Aorta (tissue), 5 donors: ENCODE measurements at regions of chr11 and their contacts with region 1.

Region 1: GRCh38 chr11:85826116-85826855 is 15.3 kb upstream of the SYTL2 start:
- DNase-seq: no peak
- ATAC-seq: no peak
- H3K4me3 ChIP-seq: no peak overlapping the region
- H3K27ac ChIP-seq: no peak overlapping the region
- H3K4me1 ChIP-seq: peaks cover 0 to 2% of the 10 kb centered on the region in 2 donors
- H3K27me3 ChIP-seq: no peaks in the 10 kb centered on the region

Region 2: DNA sequence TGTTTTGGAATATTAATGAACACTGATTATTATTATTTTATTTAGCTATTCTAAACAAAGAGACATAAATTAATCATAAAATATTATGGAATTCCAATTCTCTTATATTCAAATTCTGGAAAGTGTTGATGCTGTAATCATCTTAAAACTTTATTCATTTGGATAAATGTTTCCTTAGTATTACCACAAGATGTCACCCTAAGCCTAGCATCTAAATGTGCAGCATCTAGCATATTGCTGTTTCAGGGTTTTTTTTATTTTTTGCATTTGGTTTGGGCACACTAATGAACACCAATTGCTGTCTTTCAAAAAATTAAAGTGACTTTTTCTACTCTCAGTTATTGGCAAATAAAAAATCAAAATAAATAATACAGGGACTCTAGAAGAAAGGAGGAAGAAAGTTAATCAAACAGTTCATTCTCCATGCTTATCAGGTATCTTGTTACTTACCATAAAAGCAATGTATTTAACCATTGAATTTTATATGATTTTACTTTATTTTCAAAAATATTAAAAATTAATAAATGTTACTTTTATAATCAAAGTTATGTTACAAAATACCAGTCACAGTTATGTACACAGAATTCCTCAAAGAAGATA is 230.9 kb before region 1 on chr11:
- intact Hi-C with region 1: loop called in 1 of 2 experiments (anchors 10 kb)
- DNase-seq: no peak
- ATAC-seq: no peak
- H3K4me3 ChIP-seq: no peak overlapping the region
- H3K27ac ChIP-seq: no peak overlapping the region
- H3K4me1 ChIP-seq: no peaks in the 10 kb centered on the region
- H3K27me3 ChIP-seq: no peaks in the 10 kb centered on the region

Region 3: DNA sequence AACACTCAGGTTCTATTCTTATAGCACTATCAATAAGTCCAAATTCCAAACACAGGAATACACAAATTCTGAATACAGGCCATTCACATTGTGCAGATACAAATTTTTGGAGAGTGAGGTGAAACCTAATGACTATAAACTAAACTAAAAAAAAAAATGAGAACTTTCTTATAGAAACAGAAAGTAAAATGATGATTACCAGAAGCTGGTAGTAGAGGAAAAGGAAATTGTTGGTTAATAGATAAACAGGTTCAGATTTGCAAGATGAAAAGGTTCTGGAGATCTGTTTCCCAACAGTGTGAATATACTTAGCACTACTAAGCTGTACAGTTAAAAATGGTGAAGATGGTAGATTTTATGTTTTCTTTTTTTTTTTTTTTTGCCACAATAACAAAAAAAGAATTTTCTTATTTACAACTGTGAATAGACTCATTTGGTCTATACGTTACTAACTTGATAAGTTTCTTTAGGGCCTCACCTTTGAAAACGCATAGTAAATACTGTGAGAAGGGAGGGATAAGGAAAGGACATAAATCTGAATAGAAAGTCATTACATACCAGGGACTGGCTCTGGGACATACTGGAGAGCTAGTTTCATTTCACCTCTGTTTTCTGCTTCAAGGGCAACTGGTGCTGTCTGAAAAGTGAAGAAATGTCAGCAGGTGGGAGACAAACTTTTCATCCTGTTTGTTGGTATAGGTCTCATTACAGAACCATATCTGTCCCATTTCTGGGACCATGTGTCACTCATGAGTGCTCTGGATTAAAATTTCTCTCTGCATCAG is 126.1 kb before region 1 on chr11:
- intact Hi-C with region 1: loop called in 1 of 2 experiments (anchors 10 kb)
- DNase-seq: no peak
- ATAC-seq: no peak
- H3K4me3 ChIP-seq: no peak overlapping the region
- H3K27ac ChIP-seq: no peak overlapping the region
- H3K4me1 ChIP-seq: no peaks in the 10 kb centered on the region
- H3K27me3 ChIP-seq: no peaks in the 10 kb centered on the region

Region 4: DNA sequence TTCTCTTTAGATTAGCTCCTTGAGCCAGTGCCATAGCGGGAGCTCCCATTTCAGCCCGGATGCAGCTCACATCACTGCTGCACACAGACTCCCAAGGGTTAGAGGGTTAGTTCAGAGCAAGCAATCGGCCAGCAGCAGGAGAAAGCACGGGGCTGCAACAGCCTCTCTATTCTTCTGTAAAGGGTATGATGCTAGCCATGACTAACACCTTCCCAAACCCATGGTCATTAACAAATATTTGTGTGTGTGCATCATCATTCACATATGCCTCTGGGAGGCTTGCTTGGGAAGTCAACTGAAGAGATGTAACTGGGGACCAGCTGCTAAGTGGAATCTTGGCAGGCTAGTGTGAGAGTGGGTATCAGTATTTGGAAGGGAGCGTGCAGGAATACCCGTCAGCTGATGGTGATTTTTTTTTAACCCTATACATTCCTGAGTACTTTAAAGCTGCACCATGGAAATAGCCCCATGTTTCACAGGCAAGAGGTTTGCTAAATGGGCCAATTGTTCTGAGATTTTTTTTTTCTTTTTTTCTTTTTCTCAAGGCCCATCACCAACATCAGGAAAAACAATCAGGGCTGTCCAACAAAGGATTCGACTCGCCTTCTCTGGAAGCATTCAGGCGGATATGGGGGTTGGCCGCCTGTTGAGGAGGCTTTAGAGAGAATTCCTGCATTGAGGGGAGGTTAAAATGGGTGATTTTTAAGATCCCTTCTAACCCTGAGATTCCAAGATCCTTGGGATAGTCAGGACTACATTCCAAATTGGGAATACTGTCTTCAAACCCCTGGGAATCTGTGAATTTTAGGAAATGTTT is 107.1 kb before region 1 on chr11:
- intact Hi-C with region 1: loop called in 1 of 2 experiments (anchors 10 kb)
- DNase-seq: peak; percentile 69 to 81
- ATAC-seq: peak; percentile 60
- H3K4me3 ChIP-seq: peak overlapping the region in 1 of 2 donors; percentile 3
- H3K27ac ChIP-seq: no peak overlapping the region
- H3K4me1 ChIP-seq: peaks cover 0 to 3% of the 10 kb centered on the region in 2 donors
- H3K27me3 ChIP-seq: no peaks in the 10 kb centered on the region

Region 5: GRCh38 chr11:85759915-85760314 is 66.4 kb before region 1 on chr11:
- intact Hi-C with region 1: no loop called
- DNase-seq: no peak
- ATAC-seq: no peak
- H3K4me3 ChIP-seq: no peak overlapping the region
- H3K27ac ChIP-seq: no peak overlapping the region
- H3K4me1 ChIP-seq: peaks cover 0 to 2% of the 10 kb centered on the region in 2 donors
- H3K27me3 ChIP-seq: no peaks in the 10 kb centered on the region